ENCODE measurements at regions of chr6 and their contacts with region 1.

Region 1: GRCh38 chr6:137625796-137626195 is 131.6 kb upstream of the OLIG3 start:
- DNase-seq: no peak
- H3K4me3 ChIP-seq: no peak overlapping the region
- H3K27ac ChIP-seq: no peak overlapping the region
- H3K4me1 ChIP-seq: no peaks in the 10 kb centered on the region
- H3K27me3 ChIP-seq: no peaks in the 10 kb centered on the region
- CTCF ChIP-seq: no peak
- POLR2A ChIP-seq: no peak

Region 2: GRCh38 chr6:136921936-136922684 is 703.7 kb before region 1 on chr6 and contains the start of gene SLC35D3:
- intact Hi-C with region 1: no loop called
- DNase-seq: no peak
- H3K4me3 ChIP-seq: peak within 1 kb of the TSS; percentile 46 to 79 (median 57)
- H3K27ac ChIP-seq: no peak within 1 kb of the TSS
- H3K4me1 ChIP-seq: peaks cover 0 to 5% of the 10 kb centered on the region in 2 donors
- H3K27me3 ChIP-seq: peaks cover 7 to 29% of the 10 kb centered on the region in 2 donors
- CTCF ChIP-seq: no peak
- POLR2A ChIP-seq: no peak
- total RNA-seq, gene SLC35D3: not detected

Region 3: DNA sequence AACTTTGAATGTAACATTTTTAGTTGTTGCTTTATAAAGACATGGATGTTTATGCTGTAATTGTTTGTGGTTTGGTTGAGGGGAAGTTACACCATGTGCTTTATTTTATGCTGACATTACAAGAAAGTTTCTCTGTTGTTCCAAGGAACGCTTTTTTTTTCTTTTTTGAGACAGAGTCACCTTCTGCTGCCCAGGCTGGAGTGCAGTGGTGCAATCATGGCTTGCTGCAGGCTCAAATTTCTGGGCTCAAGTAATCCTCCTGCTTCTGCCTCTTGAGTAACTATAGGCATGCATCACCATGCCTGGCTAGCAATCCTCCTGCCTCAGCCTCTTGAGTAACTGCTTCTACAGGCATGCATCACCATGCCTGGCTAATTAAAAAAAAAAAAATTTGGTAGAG is 385.6 kb before region 1 on chr6:
- intact Hi-C with region 1: loop called (anchors 5 kb)
- DNase-seq: peak in 1 of 2 donors; percentile 67
- H3K4me3 ChIP-seq: no peak overlapping the region
- H3K27ac ChIP-seq: peak overlapping the region; percentile 45 to 80
- H3K4me1 ChIP-seq: peaks cover 0 to 3% of the 10 kb centered on the region in 2 donors
- H3K27me3 ChIP-seq: no peaks in the 10 kb centered on the region
- CTCF ChIP-seq: no peak
- POLR2A ChIP-seq: no peak

Region 4: DNA sequence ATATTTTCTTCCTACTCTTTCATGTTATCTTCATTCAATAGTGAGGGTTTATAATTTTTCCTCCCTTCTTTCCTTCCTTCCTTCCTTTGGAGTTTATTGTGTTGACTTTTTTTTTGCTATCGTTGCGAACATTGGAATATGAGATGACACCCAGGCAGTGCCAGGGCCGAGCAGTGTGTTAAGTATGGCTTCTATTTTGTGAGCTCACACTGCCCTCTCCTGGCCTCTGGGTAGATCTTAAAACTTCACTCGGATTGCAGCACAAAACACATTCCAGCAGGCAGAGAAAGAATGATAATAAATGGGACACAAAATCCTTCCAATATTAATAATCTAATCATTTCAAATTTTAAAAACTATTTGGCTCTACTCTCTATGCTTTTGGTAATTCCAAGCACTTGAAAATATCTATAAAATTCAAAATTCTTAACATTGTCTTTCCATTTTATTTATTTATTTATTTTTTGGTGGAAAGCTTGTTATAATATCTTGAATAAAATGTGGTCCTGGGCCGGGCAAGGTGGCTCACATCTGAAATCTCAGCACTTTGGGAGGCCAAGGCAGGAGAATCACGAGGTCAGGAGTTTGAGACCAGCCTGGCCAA is 15.8 kb after region 1 on chr6:
- intact Hi-C with region 1: no loop called
- DNase-seq: peak in 1 of 2 donors; percentile 64
- H3K4me3 ChIP-seq: no peak overlapping the region
- H3K27ac ChIP-seq: no peak overlapping the region
- H3K4me1 ChIP-seq: no peaks in the 10 kb centered on the region
- H3K27me3 ChIP-seq: no peaks in the 10 kb centered on the region
- CTCF ChIP-seq: peak; percentile 26 to 84 (median 77)
- POLR2A ChIP-seq: no peak

Measured in breast epithelium (tissue), 4 donors.